Activated CD8-positive, alpha-beta memory T cell treated with anti-CD3 and anti-CD28 coated beads, Interleukin-2, amount 10 ng/mL, durations not matched to agents 7 days and 5 days (primary cell): ENCODE measurements at regions of chr4 and their contacts with region 1.

Region 1: GRCh38 chr4:112765317-112765975 is 128.5 kb downstream of the LARP7 start:
- DNase-seq: no peak
- ATAC-seq: peak; percentile 65
- H3K4me3 Mint-ChIP-seq: no peak overlapping the region
- H3K27ac Mint-ChIP-seq: no peak overlapping the region
- H3K4me1 Mint-ChIP-seq: peaks cover 8% of the 10 kb centered on the region
- H3K27me3 Mint-ChIP-seq: peaks cover 2% of the 10 kb centered on the region

Region 2: GRCh38 chr4:112585977-112586736 is 179.3 kb before region 1 on chr4:
- CTCF ChIA-PET with region 1: interaction called, 10 read pairs
- DNase-seq: no peak
- ATAC-seq: no peak
- H3K4me3 Mint-ChIP-seq: no peak overlapping the region
- H3K27ac Mint-ChIP-seq: no peak overlapping the region
- H3K4me1 Mint-ChIP-seq: peaks cover 4% of the 10 kb centered on the region
- H3K27me3 Mint-ChIP-seq: no peaks in the 10 kb centered on the region

Region 3: DNA sequence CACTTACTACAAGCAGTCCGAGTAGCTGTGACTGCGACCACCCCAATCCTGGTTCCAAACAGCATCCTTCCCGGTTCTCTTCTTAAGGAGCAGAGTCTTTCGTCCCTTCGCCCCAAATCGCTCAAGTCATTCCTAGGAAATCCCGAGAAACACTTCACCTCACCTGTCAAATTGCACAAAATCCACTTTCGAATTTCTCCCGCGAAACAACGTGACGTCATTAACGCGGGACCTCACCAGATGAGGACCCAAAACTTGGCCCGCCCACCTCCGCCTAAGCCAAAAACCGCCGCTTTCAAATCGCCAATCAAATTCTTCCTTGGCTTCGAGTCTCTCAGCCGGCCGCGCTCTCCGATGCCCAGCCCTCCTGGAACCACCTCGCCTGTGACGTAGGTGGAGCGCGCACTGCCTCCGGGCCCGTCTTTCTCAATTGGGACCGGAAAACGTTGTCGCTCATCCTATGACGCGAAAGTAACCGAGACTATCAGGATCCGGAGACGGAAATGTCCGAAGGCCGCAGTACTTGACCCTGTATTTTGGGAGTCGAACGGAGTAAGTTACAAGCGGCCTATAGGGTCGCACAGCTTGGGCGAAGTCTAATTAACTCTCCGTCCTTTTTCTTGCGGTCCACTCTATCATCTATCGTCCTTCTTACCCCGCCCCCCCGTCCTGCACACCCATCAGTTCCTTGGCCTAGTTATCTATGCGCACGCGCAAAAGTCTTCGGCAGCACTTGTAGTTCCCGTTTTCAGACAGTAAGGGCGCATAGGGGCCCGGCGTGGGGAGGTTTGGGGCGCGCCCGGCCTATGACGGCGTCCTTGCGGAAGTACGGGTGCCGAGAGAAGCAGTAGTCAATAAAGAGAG is 128.5 kb before region 1 on chr4 and contains the starts of genes LARP7 and ZGRF1:
- CTCF ChIA-PET with region 1: interaction called, 57 read pairs
- DNase-seq: peak; percentile 99
- ATAC-seq: peak; percentile 93
- H3K4me3 Mint-ChIP-seq: no peak within 1 kb of the TSS
- H3K27ac Mint-ChIP-seq: no peak within 1 kb of the TSS
- H3K4me1 Mint-ChIP-seq: peaks cover 41% of the 10 kb centered on the region
- H3K27me3 Mint-ChIP-seq: no peaks in the 10 kb centered on the region
- total RNA-seq, gene LARP7: 53.3 to 53.6 TPM
- total RNA-seq, gene ZGRF1: 41.8 to 59.5 TPM

Region 4: DNA sequence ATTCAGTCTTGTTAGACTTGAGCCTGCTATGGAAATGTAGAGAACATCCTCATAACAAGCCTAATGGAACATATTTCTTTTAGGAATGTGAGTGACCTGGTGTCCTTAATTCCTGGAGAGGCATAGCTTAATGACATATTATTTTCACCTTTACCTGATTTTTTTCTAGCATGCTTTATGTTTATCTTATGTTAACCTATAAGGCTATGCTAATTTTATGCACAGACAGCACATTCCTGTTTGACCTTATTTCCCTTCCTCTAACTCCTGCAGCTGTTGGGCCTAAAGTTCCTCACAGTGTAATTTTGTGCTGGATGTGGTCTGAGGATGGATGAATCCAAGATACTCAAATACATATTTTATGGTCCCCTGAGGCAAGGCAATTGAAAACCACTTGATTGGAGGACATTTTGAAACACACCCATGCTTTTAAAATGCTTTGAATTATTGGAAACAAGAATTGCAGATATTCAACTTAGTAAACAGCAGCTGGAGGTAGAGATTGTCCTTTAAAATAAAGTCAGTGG is 17.0 kb before region 1 on chr4:
- CTCF ChIA-PET with region 1: interaction called, 11 read pairs
- DNase-seq: no peak
- ATAC-seq: no peak
- H3K4me3 Mint-ChIP-seq: no peak overlapping the region
- H3K27ac Mint-ChIP-seq: no peak overlapping the region
- H3K4me1 Mint-ChIP-seq: no peaks in the 10 kb centered on the region
- H3K27me3 Mint-ChIP-seq: peaks cover 12% of the 10 kb centered on the region

Region 5: DNA sequence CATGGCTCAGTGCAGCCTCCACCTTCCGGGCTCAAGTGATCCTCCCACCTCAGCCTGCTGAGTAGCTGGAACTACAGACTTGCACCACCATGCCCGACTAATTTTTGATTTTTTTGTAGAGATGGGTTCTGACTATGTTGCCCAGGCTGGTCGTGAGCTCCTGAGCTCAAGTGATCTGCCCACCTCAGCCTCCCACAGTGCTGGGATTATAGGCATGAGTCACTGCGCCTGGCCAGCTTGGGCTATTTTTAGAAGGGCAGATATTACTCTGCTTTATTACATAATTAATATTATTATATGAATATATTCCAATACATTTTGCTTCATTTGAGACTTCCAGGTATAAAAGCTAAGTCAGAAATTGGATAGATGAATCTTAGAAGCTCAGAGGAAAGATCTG is 140.3 kb after region 1 on chr4:
- CTCF ChIA-PET with region 1: no interaction called
- DNase-seq: no peak
- ATAC-seq: no peak
- H3K4me3 Mint-ChIP-seq: no peak overlapping the region
- H3K27ac Mint-ChIP-seq: no peak overlapping the region
- H3K4me1 Mint-ChIP-seq: peaks cover 2% of the 10 kb centered on the region
- H3K27me3 Mint-ChIP-seq: peaks cover 23% of the 10 kb centered on the region

Region 6: GRCh38 chr4:112938461-112939058 is 173.1 kb after region 1 on chr4:
- CTCF ChIA-PET with region 1: interaction called, 14 read pairs
- DNase-seq: no peak
- ATAC-seq: no peak
- H3K4me3 Mint-ChIP-seq: no peak overlapping the region
- H3K27ac Mint-ChIP-seq: no peak overlapping the region
- H3K4me1 Mint-ChIP-seq: no peaks in the 10 kb centered on the region
- H3K27me3 Mint-ChIP-seq: peaks cover 10% of the 10 kb centered on the region